ENCODE measurements at regions of chr2 and their contacts with region 1.

Region 1: DNA sequence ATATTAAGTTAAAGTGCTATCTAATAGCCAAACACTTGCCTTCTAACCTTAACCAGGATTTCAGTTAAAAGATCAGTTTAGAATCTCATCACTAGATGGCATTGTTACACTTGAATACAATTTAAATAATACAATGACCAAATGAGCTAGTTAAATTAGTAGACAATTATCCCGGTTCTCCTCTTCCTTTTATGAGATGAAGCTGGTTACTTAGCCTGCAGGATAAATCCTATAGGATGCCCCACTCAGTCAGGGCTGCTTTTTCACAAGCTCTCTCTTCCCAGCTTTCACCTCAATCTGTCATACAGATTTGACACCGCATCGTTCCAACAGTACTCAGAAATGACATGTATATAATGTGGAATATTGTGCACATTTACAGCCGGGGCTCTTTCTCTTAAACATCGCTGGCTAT is 678.8 kb downstream of the KCNJ3 start:
- DNase-seq: peak; percentile 32 to 65 (median 59)
- H3K4me3 ChIP-seq: no peak overlapping the region
- H3K27ac ChIP-seq: peak overlapping the region in 1 of 2 experiments; percentile 31
- H3K4me1 ChIP-seq: peaks cover 0 to 21% (median 4%) of the 10 kb centered on the region in 4 experiments
- H3K27me3 ChIP-seq: no peaks in the 10 kb centered on the region

Region 2: GRCh38 chr2:155815886-155816285 is 438.6 kb after region 1 on chr2:
- CTCF ChIA-PET with region 1: interaction called, 22 read pairs
- POLR2A ChIA-PET with region 1: no interaction called
- DNase-seq: peak; percentile 4 to 50 (median 43)
- H3K4me3 ChIP-seq: no peak overlapping the region
- H3K27ac ChIP-seq: no peak overlapping the region
- H3K4me1 ChIP-seq: no peaks in the 10 kb centered on the region
- H3K27me3 ChIP-seq: no peaks in the 10 kb centered on the region

Region 3: GRCh38 chr2:157194097-157194688 is 1816.9 kb after region 1 on chr2:
- CTCF ChIA-PET with region 1: interaction called, 13 read pairs
- POLR2A ChIA-PET with region 1: interaction called, 3 read pairs
- DNase-seq: peak; percentile 42 to 77 (median 75)
- H3K4me3 ChIP-seq: no peak overlapping the region
- H3K27ac ChIP-seq: no peak overlapping the region
- H3K4me1 ChIP-seq: no peaks in the 10 kb centered on the region
- H3K27me3 ChIP-seq: peaks cover 0 to 2% (median 0%) of the 10 kb centered on the region in 5 experiments

Measured in common myeloid progenitor, CD34-positive (primary cell).